GM10248 (cell line): ENCODE measurements at regions of chr2 and their contacts with region 1.

Region 1: GRCh38 chr2:143937723-143938350 is 582.1 kb downstream of the ZEB2 start:
- DNase-seq: no peak
- CTCF ChIP-seq: no peak

Region 2: DNA sequence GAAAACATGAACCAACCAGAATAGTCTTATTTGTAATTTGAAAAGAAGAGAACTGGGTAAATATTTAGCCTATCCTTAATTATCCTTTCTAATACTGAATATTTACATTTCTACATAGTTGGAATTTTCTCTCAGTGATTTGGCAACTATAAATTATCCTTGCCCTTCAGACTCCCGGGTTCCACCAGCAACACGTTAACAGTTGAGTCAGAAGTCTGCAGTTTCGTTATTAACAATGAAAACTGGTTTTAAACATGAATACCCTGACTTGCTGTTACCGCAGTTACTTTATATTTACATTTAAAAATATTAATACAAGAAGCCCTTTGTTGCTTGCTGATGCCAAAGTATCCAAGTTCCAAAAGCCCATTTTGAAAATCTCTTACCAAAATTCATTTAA is 135.6 kb before region 1 on chr2:
- CTCF ChIA-PET with region 1: no interaction called
- POLR2A ChIA-PET with region 1: no interaction called
- DNase-seq: peak; percentile 15
- CTCF ChIP-seq: no peak

Region 3: GRCh38 chr2:143901185-143901842 is 36.5 kb before region 1 on chr2:
- CTCF ChIA-PET with region 1: no interaction called
- POLR2A ChIA-PET with region 1: no interaction called
- DNase-seq: no peak
- CTCF ChIP-seq: no peak

Region 4: GRCh38 chr2:143949121-143949848 is 11.4 kb after region 1 on chr2:
- CTCF ChIA-PET with region 1: interaction called, 14 read pairs
- POLR2A ChIA-PET with region 1: no interaction called
- DNase-seq: no peak
- CTCF ChIP-seq: no peak